Mammary epithelial cell (primary cell): ENCODE measurements at regions of chr2 and their contacts with region 1.

Region 1: GRCh38 chr2:127064642-127065250 is 42.2 kb downstream of the BIN1 start:
- DNase-seq: peak; percentile 97
- H3K4me3 ChIP-seq: no peak overlapping the region
- H3K27ac ChIP-seq: peak overlapping the region; percentile 69
- H3K4me1 ChIP-seq: peaks cover 26% of the 10 kb centered on the region
- H3K27me3 ChIP-seq: no peaks in the 10 kb centered on the region
- CTCF ChIP-seq: peak; percentile 22 to 43

Region 2: GRCh38 chr2:127174136-127174535 is 109.4 kb after region 1 on chr2:
- CTCF ChIA-PET with region 1: no interaction called
- dilution Hi-C with region 1: no loop called
- in situ Hi-C with region 1: no loop called
- intact Hi-C with region 1: loop called (anchors 1 kb)
- DNase-seq: no peak
- H3K4me3 ChIP-seq: no peak overlapping the region
- H3K27ac ChIP-seq: no peak overlapping the region
- H3K4me1 ChIP-seq: no peaks in the 10 kb centered on the region
- H3K27me3 ChIP-seq: no peaks in the 10 kb centered on the region
- CTCF ChIP-seq: peak in 1 of 2 donors; percentile 9

Region 3: DNA sequence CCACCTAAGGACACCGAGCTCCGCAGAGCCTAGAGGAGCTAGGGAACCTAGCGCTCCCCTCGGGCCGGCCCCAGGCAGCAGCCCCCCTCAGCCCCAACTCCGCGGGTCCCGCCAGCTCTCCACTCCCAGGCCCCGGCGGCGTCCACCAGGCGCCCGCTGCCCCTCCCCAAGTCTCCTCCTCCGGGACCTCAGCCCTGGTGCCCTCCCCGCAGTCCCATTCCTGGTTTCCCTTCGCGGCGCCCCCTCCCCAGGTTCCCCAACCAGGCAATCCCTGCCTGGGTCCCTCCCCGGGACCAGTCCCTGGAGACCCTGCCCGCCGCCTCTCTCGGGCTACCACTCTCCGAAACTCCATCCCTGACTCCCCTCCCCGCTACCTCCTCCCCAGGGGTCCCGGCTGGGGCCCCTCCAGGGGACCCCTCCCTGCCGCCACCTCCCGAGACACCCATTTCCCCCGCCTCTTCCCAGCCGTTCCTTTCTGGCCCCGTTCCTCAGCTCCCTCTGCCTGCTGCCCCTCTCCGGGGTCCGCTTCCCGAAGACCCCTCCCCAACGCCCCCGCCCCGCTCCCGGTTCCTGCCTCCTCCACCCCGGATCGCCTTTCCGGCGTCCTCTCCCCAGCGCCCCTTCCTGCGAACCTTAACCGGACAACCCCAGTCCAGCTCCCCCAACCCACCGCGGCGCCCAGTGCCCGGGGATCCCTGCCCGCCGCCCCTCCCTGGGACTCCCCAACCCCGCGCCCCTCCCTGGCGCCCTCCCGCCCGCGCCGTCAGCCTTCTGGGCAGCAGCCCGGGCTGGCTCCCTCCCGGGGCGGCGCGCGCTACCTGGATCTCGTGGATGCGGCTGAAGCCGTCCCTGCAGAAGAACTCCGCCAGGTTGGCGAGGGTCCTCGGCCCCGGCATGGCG is 154.7 kb after region 1 on chr2:
- CTCF ChIA-PET with region 1: no interaction called
- dilution Hi-C with region 1: no loop called
- in situ Hi-C with region 1: no loop called
- intact Hi-C with region 1: loop called (anchors 1 kb)
- DNase-seq: no peak
- H3K4me3 ChIP-seq: peak overlapping the region; percentile 70 to 92 (median 78)
- H3K27ac ChIP-seq: peak overlapping the region; percentile 93
- H3K4me1 ChIP-seq: peaks cover 42% of the 10 kb centered on the region
- H3K27me3 ChIP-seq: no peaks in the 10 kb centered on the region
- CTCF ChIP-seq: no peak

Region 4: DNA sequence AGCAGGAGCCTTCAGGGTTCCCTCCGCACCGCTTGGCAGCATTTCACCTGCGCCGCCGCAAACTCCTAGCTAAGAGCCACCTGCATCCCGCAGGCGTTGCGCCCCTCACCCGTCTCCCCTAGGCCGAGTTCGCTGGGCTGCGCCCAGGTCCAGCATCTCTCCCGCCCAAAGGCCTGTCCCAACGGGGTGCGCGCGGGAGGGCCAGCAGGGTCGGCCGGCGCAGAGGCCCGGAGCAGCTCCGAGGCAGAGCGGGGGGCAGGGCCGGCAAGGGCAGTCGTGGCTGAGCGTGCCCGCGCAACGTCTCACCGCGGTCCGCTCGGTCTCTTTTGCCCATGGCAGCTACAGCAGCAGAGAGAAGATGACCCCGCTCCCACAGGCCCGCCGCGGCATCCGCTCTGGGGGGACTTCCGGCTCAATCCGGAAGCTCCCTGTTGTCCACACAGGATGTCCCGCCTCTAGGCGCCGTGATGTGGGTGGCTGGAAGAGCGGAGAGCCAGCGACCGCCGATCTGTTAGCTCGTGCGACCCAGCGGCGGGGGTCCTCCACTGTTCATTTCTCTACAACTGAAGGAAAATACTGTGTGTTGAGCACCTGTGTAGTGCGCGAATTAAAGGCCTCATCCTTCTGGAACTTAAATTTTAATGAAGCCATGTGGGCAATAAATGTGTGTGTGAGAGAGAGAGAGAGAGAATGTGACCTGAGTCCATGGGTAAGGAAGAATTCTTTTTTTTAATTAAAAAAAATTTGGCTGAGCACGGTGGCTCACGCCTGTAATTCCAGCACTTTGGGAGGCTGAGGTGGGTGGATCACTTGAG is 229.2 kb after region 1 on chr2 and contains the start of gene ERCC3:
- CTCF ChIA-PET with region 1: no interaction called
- dilution Hi-C with region 1: no loop called
- in situ Hi-C with region 1: no loop called
- intact Hi-C with region 1: loop called (anchors 1 kb)
- DNase-seq: peak; percentile 66
- H3K4me3 ChIP-seq: peak within 1 kb of the TSS; percentile 75 to 87 (median 83)
- H3K27ac ChIP-seq: peak within 1 kb of the TSS; percentile 69
- H3K4me1 ChIP-seq: no peaks in the 10 kb centered on the region
- H3K27me3 ChIP-seq: no peaks in the 10 kb centered on the region
- CTCF ChIP-seq: no peak
- total RNA-seq, gene ERCC3: 34.7 to 40.0 TPM

Region 5: GRCh38 chr2:127422810-127423475 is 358.2 kb after region 1 on chr2:
- CTCF ChIA-PET with region 1: no interaction called
- dilution Hi-C with region 1: no loop called
- in situ Hi-C with region 1: no loop called
- intact Hi-C with region 1: loop called (anchors 5 kb)
- DNase-seq: no peak
- H3K4me3 ChIP-seq: peak overlapping the region; percentile 18 to 54 (median 50)
- H3K27ac ChIP-seq: no peak overlapping the region
- H3K4me1 ChIP-seq: peaks cover 9% of the 10 kb centered on the region
- H3K27me3 ChIP-seq: peaks cover 5% of the 10 kb centered on the region
- CTCF ChIP-seq: no peak

Region 6: GRCh38 chr2:127479219-127479825 is 414.6 kb after region 1 on chr2:
- CTCF ChIA-PET with region 1: no interaction called
- dilution Hi-C with region 1: no loop called
- in situ Hi-C with region 1: no loop called
- intact Hi-C with region 1: loop called (anchors 2 kb)
- DNase-seq: peak; percentile 12
- H3K4me3 ChIP-seq: no peak overlapping the region
- H3K27ac ChIP-seq: no peak overlapping the region
- H3K4me1 ChIP-seq: no peaks in the 10 kb centered on the region
- H3K27me3 ChIP-seq: no peaks in the 10 kb centered on the region
- CTCF ChIP-seq: peak; percentile 68 to 71

Region 7: GRCh38 chr2:127649684-127650040 is 584.9 kb after region 1 on chr2:
- CTCF ChIA-PET with region 1: no interaction called
- dilution Hi-C with region 1: no loop called
- in situ Hi-C with region 1: no loop called
- intact Hi-C with region 1: loop called (anchors 2 kb)
- DNase-seq: peak; percentile 64
- H3K4me3 ChIP-seq: no peak overlapping the region
- H3K27ac ChIP-seq: no peak overlapping the region
- H3K4me1 ChIP-seq: peaks cover 4% of the 10 kb centered on the region
- H3K27me3 ChIP-seq: no peaks in the 10 kb centered on the region
- CTCF ChIP-seq: peak; percentile 82 to 90